Posterior vena cava (tissue), 2 donors: ENCODE measurements at regions of chr2 and their contacts with region 1.

Region 1: DNA sequence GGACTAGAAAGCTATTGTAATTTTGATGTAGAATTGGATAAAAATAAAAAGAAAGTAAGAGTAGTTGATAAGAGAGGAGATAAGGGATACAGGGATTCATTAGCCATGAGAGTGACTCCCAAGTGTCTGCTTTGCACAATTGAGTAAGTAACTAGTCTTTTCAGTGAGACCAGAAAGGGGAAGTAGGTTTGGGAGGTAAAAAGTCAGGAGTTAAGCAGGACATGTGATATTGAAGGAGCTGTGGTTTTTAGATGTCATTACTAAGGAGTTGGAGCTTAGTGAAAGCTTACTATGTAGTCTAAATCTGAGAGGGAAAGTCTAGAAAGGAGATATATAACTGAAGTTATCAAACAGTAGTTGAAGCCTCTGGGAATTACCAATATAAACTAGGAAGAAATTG is 93.4 kb downstream of the SLC5A7 start:
- DNase-seq: no peak

Region 2: GRCh38 chr2:108069515-108070310 is 10.0 kb before region 1 on chr2:
- intact Hi-C with region 1: no loop called
- DNase-seq: no peak

Region 3: GRCh38 chr2:108124736-108125495 is 45.2 kb after region 1 on chr2:
- intact Hi-C with region 1: no loop called
- DNase-seq: no peak

Region 4: DNA sequence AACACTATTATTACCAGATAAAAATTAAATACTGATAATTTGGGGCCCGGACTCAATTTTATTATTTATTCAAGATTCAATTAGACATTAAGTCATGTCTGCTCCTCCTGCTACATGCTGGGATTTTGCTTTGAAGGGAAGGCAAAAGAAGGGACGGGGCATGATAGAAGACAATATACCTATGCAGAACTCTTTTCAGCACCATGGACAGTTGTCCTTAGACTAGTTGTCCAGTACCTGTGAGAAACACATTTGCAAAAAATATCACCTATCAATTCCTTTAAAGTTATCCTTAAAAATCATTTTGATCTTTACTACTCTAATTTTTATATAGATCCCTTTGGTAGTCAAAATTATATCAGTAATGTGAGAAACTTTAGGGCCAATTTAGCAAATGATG is 59.8 kb after region 1 on chr2:
- intact Hi-C with region 1: no loop called
- DNase-seq: no peak

Region 5: DNA sequence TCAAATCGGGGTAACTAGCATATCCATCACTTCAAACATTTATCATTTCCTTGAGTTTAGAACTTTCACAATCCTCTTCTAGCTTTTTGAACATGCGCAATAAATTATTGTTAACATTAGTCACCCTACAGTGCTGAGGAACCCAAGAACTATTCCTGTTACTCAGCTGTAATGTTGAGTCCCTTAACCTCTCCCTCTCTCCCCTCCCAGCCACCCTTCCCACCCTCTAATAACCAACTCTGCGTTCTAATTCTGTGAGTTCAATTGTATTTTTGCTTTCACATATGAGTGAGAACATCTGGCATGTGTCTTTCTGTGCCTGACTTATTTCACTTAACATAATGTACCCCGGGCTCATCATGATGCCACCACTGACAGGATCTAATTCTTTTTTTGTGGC is 561.0 kb after region 1 on chr2:
- intact Hi-C with region 1: loop called in 1 of 2 experiments (anchors 5 kb)
- DNase-seq: no peak